ENCODE measurements at regions of chr5 and their contacts with region 1.

Region 1: GRCh38 chr5:74648835-74649293 is 8.3 kb upstream of the ENC1 start:
- DNase-seq: no peak
- ATAC-seq: peak; percentile 86 to 89
- H3K4me3 ChIP-seq: no peak overlapping the region
- H3K27ac ChIP-seq: no peak overlapping the region
- H3K4me1 ChIP-seq: no peaks in the 10 kb centered on the region
- H3K27me3 ChIP-seq: no peaks in the 10 kb centered on the region

Region 2: GRCh38 chr5:73902327-73903051 is 746.4 kb before region 1 on chr5:
- intact Hi-C with region 1: loop called (anchors 2 to 5 kb)
- DNase-seq: no peak
- ATAC-seq: peak; percentile 34 to 51
- H3K4me3 ChIP-seq: no peak overlapping the region
- H3K27ac ChIP-seq: no peak overlapping the region
- H3K4me1 ChIP-seq: no peaks in the 10 kb centered on the region
- H3K27me3 ChIP-seq: no peaks in the 10 kb centered on the region

Measured in right cardiac atrium (tissue), 5 donors.